PC-3 (cell line): ENCODE measurements at regions of chr14 and their contacts with region 1.

Region 1: DNA sequence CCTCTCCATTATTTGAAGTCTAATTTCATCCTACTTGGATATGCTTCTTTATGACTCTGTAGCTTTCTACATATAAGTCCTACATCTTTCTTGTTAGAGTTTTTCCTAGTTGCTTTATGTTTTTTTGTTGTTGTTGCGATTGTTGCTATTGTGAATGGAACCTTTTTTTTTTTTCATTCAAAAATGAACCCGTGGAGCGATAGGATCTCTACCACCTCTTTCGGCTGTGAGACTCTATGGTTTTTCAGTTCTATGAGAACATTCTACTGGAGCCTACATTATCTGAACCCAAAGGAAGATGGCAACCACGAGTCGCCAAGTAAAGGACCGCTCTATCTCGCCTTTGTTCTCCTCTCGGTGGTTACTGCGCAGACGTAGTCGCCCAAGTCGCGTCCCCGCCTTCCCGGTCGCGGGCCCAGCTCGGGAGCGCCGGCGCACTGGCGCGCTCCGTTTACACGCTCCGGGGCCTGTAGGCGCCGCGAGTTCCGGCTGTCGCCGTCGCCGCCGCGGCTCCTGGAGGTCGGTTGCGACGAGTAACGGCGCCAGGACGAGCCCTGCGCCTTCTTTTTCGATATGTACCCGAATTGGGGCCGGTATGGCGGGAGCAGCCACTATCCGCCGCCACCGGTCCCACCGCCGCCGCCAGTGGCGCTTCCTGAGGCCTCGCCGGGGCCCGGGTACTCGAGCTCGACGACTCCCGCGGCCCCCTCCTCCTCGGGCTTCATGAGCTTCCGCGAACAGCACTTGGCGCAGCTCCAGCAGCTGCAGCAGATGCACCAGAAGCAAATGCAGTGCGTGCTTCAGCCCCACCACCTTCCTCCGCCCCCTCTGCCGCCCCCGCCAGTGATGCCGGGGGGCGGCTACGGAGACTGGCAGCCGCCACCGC is at the start of gene YLPM1:
- DNase-seq: peak; percentile 98
- ATAC-seq: peak; percentile 91
- H3K4me3 ChIP-seq: peak within 1 kb of the TSS; percentile 90
- H3K27ac ChIP-seq: peak within 1 kb of the TSS; percentile 41
- H3K4me1 ChIP-seq: peaks cover 20% of the 10 kb centered on the region
- H3K27me3 ChIP-seq: no peaks in the 10 kb centered on the region
- CTCF ChIP-seq: peak; percentile 69
- total RNA-seq, gene YLPM1: 25.1 and 30.8 TPM in 2 replicates

Region 2: DNA sequence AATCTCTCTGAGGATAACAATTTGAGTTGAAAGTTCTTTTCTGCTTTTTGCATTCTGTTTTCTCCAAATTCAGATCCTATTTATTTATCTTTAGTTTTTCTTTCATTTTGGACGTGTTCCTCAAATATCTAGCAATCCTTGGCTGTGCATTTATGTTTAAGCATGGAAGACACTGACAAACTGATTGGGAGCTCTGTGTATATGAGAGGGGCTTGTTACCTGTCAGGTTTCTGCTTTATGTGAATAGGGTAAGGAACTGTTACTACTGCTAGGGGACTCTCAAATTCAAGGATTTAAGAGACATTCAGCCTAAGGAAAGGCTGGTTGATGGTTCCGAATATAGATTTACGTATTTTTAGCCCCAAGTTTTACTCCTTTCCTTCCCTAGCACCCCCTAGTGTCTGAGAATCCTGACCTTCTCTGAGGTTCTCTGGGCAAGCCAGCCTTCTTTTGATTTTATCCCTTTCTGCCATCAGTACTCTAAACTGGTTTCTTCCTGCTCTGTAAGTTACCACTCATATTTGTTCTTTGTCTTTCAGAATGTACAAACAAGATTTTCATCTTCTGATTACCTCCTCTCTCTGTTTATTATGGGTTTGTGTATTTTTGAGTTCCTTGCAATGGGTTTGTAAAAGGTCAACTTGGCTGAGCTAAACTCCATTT is 30.5 kb after region 1 on chr14:
- CTCF ChIA-PET with region 1: no interaction called
- POLR2A ChIA-PET with region 1: interaction called, 24 read pairs
- intact Hi-C with region 1: no loop called
- DNase-seq: peak; percentile 32
- ATAC-seq: no peak
- H3K4me3 ChIP-seq: no peak overlapping the region
- H3K27ac ChIP-seq: no peak overlapping the region
- H3K4me1 ChIP-seq: no peaks in the 10 kb centered on the region
- H3K27me3 ChIP-seq: no peaks in the 10 kb centered on the region
- CTCF ChIP-seq: peak; percentile 59